GM13977 (cell line): ENCODE measurements at regions of chr3 and their contacts with region 1.

Region 1: DNA sequence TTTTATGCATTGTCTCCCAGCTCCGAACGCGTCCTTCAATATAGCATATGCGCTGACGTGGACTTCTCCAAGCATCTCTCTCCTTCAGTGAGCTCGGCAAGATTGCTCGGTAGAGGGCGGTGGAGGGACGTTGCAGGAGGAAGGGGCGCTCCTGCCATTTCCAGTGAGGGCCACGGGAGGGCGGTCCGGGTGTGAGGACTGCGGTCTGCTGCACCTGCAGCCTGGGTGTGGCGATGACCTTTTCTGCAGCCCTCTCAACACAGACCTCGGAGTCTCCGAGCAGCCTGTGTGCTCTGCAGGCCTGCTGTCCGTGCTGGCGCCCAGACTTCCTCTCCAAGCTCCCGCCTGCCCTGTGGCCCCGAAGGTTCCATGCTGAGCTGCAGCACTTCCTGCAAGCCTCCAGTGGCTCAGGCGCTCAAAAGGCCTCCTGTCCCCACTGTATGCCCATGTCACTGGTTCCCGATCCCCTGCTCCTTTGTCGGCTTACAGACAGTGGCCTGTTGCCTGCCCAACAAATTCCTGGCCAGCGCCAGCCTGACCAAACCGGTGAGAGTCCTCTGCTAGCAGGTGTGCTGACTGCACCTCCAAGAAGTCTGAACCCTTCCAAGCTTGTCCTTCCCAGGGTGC is 8.9 kb upstream of the RTP3 start:
- DNase-seq: peak; percentile 95
- CTCF ChIP-seq: peak; percentile 100

Region 2: DNA sequence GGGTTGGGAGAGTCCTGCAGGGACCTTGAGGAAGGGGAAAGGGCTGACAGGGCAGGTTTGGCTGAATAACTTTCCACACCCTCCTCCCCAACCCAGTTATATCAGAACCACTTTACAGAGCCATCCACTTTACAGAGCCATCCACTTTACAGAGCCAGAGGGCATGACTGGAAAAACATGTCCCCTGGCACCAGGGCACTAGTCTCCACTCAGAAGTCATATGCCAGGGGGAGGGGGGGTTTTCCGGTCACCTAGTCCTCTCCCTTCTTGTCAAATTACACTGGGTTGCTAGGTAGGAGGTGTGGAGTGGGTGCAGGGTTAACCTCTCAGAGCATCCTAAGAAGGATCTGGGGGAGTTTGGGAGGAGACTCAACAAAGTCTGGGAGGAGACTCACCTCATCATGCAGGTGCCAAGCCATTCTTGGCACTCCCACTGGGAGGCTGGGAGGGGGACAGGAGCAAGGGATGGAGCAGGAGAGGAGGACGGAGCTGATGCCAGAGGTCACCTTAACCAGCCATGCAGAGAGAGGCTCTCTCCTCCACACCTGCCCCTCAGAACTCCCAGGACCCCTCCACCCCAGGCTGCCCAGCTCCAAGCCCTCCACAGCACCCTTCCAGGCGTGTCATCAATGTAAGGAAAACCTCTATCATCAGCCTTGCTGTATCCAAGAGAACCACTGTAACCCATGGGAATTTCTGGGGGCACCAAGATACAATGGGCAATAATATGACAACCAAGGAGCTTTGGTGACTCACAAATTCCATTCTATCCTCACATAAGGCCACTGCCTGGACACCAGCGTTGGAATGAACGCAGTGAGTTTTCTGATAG is 75.6 kb after region 1 on chr3:
- in situ Hi-C with region 1: loop called (anchors 5 kb)
- DNase-seq: no peak
- CTCF ChIP-seq: no peak

Region 3: DNA sequence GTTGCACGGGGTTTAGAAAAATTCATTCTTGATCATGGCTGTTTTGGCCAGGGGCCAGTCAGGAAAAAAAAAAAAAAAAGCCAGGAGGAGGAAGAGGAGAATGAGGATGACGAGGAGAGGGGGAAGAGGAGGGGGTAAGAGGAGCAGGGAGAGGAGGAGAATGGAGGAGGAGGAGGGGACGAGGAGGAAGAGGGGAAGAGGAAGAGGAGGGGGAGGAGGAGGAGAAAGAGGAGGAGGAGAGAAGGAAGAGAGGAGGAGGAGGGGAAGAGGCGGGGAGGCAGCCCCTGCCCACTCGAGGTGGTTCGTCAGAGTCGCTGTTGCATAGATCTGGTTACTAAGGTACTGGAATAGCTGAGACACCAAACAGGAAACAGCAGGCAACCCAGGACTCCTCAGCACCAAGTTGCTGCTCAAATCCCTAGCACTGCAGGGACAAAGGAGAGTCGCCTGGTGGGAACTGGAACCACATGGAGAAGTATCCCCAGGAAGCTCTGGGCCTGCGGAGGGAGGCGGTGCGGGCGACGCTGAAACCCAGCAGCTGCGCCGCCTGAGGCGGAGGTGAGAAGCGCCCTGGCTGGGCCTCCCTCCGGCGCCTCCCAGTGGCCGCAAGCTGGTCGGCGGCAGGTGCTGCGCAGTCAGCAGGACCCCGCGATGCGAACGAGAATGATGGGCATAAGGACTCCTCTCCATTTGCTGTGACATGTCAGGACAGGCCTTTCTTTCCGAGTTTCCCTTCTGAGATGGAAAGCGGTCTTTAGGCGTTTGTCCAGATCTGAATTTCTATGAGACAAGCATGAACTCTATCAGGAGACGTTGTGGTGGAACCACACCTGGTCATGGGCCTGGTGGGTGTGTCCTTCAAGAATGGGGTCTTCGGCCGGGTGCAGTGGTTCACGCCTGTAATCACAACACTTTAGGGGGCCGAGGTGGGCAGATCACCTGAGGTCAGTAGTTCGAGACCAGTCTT is 141.0 kb after region 1 on chr3:
- in situ Hi-C with region 1: loop called (anchors 10 kb)
- DNase-seq: peak; percentile 82
- CTCF ChIP-seq: peak; percentile 100

Region 4: DNA sequence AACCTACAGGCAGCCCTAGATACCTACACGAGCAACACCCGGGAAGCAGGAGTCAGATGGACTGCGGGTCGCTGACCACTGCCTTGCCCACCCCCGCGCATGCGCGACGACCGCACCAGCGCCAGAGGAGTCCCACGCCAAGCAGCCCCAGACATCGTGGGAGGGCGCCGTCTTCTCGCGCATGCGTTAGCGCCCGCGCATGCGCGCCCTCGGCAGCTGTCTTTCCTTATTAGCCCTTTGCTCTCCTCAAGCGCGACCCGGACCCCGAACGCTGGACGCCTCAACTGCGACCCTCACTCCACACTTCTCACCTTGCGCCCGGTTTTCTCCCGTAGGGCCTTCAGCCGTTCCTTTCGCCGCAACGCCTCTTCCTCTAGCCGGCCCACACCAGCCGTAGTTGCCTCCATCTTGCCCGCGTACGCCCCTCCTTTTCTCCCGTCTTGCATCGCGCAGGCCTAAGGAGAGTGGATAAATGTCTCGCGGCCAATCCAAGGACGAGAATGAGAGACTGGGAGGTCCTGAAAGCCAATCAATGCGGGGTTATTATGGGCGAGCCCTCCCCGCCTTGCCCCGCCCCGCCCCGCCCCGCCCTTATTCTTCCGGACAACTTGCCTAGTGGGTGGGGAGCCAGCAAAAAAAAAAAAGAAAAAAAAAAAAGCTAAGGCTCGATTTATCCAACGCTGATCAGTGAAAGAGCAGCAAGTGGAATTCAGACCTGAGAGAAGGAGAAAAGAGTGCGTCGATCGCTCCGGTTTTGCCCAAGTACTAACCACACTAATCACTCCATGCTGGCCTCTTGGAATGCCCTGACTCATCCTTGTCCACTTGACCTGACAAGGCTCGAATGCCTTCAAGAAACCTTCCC is 487.7 kb after region 1 on chr3 and contains the start of gene CCDC12:
- in situ Hi-C with region 1: no loop called
- DNase-seq: peak; percentile 98
- CTCF ChIP-seq: no peak

Region 5: GRCh38 chr3:47261301-47261700 is 772.5 kb after region 1 on chr3:
- in situ Hi-C with region 1: no loop called
- DNase-seq: no peak
- CTCF ChIP-seq: no peak